HEK293T (cell line): ENCODE measurements at regions of chr5 and their contacts with region 1.

Region 1: GRCh38 chr5:139560752-139561654 is at the start of gene UBE2D2:
- DNase-seq: peak; percentile 95

Region 2: DNA sequence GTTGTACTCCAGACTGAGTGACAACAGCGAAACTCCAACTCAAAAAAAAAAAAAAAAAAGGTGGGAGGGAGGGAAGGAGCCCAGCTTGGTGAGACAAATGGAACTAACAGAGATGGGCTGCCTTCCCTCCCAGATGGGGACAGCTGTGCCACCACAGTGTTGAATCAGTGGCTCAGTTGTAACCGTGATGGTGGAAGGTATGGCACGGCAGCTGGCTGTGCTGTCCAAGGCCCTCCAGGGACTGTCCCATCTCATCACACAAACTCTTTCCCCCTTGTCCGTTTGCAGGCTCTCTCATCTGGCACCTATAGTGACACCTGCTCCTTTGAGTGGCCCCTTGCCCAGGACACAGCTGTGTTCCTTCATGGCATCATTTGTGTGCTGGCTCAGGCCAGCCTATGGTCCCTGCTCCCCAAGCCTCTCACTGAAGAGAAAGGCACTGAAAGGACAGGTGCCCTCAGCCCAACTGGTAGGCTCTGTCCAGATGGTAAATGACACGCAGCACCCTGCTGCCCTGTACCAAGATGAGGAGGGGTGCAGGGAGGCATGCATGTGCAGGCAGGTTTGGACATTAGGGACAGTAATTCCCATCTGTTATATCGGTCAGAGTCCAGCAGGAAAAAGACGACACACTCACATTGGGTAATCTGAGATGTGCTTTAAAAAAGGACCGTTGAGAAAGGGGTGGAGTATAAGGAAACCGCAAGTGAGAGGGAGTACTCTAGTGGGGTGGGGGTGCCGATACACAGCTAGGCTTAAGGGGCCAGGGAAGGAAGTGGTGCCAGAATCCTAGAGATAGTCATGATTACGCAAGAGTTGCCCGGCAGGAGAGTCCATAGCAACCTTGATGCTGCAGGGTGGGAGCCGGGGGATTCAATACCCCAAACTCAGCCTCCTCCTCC is 85.9 kb before region 1 on chr5:
- CTCF ChIA-PET with region 1: no interaction called
- POLR2A ChIA-PET with region 1: no interaction called
- DNase-seq: no peak

Region 3: DNA sequence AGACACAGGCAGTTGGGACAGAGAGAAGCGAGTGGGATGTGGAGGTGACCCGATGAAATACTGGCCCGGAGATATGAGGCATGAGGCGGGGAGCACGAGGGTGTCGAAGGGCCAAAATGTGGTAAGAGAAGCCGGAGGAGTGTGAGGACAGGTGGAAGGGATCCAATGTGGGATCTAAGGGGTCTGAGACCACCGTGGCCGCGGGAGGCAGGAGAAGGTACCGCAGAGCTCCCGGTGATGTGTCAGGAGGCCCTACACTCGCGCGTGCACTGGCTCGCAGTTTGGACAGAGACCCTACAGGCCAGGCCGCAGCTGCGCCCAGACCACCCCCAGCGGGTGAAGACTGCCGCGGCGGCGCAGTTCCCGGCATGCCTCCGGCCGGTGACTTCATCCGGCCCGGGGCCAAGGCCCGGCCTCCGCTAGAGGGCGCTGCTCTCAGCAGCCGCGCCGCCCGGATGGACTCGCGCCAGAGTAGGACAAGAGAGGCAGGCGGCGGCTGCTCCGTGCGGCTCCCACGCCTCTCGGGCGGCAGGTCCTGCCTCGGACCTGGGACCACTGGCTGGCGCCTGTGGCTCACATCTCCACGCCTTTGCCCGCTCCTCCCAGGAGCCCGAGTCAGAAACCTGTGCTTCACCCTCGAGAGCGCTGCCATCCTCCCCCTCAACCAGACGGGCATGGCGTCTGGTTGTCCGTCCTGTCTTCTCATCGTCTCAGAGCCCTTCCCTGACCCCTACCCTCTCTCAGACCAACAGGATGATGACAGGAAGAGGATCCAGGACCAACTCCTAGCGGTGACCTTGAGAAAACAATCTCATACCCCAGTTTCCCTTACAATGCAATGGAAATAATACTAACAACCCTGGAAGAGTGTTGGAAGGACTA is 43.1 kb before region 1 on chr5:
- CTCF ChIA-PET with region 1: interaction called, 3 read pairs
- POLR2A ChIA-PET with region 1: interaction called, 21 read pairs
- DNase-seq: peak; percentile 95

Region 4: GRCh38 chr5:139574641-139575312 is 13.8 kb after region 1 on chr5:
- CTCF ChIA-PET with region 1: interaction called, 15 read pairs
- POLR2A ChIA-PET with region 1: interaction called, 9 read pairs
- DNase-seq: peak; percentile 53